Dendritic cell treated with granulocyte-macrophage colony-stimulating factor and Interleukin-4, amounts not matched to agents 40 ng/mL and 50 ng/mL, for 4 days (primary cell): ENCODE measurements at regions of chr12 and their contacts with region 1.

Region 1: GRCh38 chr12:69900720-69901131 is 75.7 kb downstream of the MYRFL start:
- H3K4me3 Mint-ChIP-seq: no peak overlapping the region
- H3K27ac Mint-ChIP-seq: no peak overlapping the region
- H3K4me1 Mint-ChIP-seq: no peaks in the 10 kb centered on the region
- H3K27me3 Mint-ChIP-seq: no peaks in the 10 kb centered on the region

Region 2: DNA sequence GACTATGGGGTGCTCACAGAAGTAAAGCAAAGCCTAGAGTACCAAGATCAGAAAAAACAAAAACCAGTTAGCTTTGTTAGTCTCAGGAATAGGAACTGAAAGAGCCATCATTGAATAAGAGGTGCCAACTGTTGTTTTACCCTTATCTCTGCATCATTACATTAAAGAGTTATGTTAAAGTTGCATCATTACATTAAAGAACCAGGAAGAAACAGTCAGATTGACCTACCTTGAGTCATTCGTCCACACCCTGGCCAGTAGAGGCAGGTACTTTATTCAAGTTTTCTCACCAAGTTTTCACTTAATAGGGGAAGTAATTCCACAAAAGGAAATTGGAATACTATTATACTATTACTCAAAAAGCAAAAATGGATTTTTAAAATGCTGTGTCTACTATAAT is 220.8 kb after region 1 on chr12:
- intact Hi-C with region 1: no loop called
- H3K4me3 Mint-ChIP-seq: no peak overlapping the region
- H3K27ac Mint-ChIP-seq: no peak overlapping the region
- H3K4me1 Mint-ChIP-seq: no peaks in the 10 kb centered on the region
- H3K27me3 Mint-ChIP-seq: no peaks in the 10 kb centered on the region

Region 3: DNA sequence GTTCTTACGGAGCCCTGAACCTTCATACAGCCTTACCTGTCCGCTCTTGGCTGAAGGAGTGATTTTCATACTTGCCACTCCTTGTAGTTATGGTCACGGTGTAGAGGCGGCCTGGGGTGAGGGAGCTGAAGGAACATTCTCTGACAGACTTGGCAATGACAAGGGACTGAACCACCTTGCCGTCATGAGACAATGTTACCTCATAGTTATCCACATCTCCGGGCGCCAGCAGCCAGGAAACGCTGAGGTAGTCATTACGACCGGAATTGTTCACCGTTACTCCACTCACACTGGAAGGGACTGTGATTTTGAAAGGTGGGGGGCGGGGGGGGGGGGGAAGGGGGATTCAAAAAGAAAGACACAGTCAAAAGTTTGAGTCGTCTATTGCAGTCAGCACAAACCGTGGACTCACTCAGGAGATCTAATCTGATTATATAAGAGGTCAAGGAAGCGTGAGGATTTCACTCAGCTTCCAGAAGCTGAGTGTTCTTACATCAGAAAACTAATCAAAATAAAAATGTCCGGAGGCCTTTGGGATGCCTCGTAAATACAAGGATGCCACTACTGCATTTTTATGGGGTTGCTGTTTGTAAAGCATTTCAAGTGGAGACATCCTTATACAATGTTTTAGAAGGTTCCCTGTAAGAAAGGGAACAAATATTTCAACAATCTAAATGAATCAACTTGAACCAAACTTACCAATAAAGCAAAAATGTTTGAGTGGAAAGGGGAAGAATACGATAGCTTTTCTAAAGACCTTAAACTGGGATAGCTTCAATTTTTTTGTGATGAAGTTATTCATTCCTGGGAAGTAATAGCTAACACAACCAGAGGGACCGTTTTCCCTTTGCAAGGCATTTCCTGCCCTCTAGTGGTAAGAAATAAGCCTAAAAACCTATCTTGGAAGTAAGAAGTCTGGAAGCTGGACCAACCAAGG is 675.9 kb after region 1 on chr12:
- intact Hi-C with region 1: loop called (anchors 1 kb)
- H3K4me3 Mint-ChIP-seq: no peak overlapping the region
- H3K27ac Mint-ChIP-seq: no peak overlapping the region
- H3K4me1 Mint-ChIP-seq: no peaks in the 10 kb centered on the region
- H3K27me3 Mint-ChIP-seq: peaks cover 1% of the 10 kb centered on the region